ENCODE measurements at regions of chr11 and their contacts with region 1.

Region 1: DNA sequence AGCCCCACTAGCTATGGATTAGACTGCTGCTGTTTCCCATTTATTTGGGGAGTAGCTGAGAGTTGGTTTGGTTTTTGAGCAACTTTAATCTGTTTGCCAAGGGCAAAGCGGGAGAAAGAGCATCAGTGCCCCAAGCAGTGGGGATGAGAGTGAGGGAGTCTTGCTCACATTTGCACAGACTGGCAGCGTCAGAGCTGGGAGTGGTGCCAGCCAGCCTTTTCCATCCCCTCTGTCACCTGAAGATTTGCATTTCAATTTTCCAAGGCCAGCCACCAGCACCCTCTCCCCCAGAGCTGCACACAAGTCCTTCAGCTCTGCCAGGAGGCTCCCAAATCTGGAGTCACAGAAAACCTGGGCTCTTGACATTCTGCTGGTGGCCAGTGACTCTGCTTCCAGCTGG is 21.0 kb upstream of the UVRAG start:
- DNase-seq: no peak
- ATAC-seq: peak; percentile 17

Region 2: GRCh38 chr11:75745807-75746206 is 48.2 kb before region 1 on chr11:
- intact Hi-C with region 1: loop called (anchors 1 kb)
- DNase-seq: no peak
- ATAC-seq: peak; percentile 96

Region 3: DNA sequence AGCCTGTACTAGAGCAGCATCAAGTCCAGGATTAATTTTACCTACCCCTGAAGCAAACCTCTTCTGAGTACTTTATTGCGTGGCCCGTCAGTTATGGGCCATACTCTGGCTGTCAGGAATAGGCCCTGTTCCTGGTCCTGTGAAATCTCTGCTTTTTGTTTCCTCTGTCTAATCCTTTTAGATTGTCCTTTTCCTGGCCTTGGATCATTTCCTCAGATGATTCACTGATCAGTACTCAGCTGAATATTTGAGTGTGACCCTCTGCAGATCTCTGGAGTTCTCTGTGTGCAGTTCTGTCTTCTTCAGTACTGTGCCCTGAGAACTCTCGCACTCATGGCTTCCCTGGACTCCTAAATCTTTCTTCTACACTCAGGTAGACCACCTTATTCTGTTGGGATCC is 144.6 kb after region 1 on chr11:
- intact Hi-C with region 1: no loop called
- DNase-seq: no peak
- ATAC-seq: peak; percentile 46